ENCODE measurements at regions of chr14 and their contacts with region 1.

Region 1: GRCh38 chr14:77320238-77320935 is at the start of gene POMT2:
- DNase-seq: no peak
- ATAC-seq: peak; percentile 82
- H3K4me3 ChIP-seq: peak within 1 kb of the TSS; percentile 83 to 86
- H3K27ac ChIP-seq: peak within 1 kb of the TSS; percentile 86
- H3K4me1 ChIP-seq: peaks cover 31% of the 10 kb centered on the region
- H3K27me3 ChIP-seq: no peaks in the 10 kb centered on the region
- CTCF ChIP-seq: peak; percentile 48; the same call in 1 of the 2 replicates
- total RNA-seq, gene POMT2: 43.5 TPM

Region 2: GRCh38 chr14:77097700-77098528 is 222.5 kb before region 1 on chr14 and contains the start of gene CIPC:
- CTCF ChIA-PET with region 1: no interaction called
- POLR2A ChIA-PET with region 1: interaction called, 14 read pairs
- in situ Hi-C with region 1: no loop called
- intact Hi-C with region 1: no loop called
- DNase-seq: peak; percentile 78
- ATAC-seq: peak; percentile 94
- H3K4me3 ChIP-seq: peak within 1 kb of the TSS; percentile 87 to 97
- H3K27ac ChIP-seq: peak within 1 kb of the TSS; percentile 98
- H3K4me1 ChIP-seq: peaks cover 17% of the 10 kb centered on the region
- H3K27me3 ChIP-seq: no peaks in the 10 kb centered on the region
- CTCF ChIP-seq: no peak
- total RNA-seq, gene CIPC: 20.3 TPM

Region 3: GRCh38 chr14:77151918-77152588 is 168.3 kb before region 1 on chr14:
- CTCF ChIA-PET with region 1: interaction called, 33 read pairs
- POLR2A ChIA-PET with region 1: no interaction called
- in situ Hi-C with region 1: no loop called
- intact Hi-C with region 1: loop called (anchors 5 kb)
- DNase-seq: peak; percentile 24
- ATAC-seq: peak; percentile 83
- H3K4me3 ChIP-seq: no peak overlapping the region
- H3K27ac ChIP-seq: no peak overlapping the region
- H3K4me1 ChIP-seq: no peaks in the 10 kb centered on the region
- H3K27me3 ChIP-seq: peaks cover 3% of the 10 kb centered on the region; the same call in 1 of the 2 replicates
- CTCF ChIP-seq: no peak; the same call in 1 of the 2 replicates

Region 4: GRCh38 chr14:77195771-77196201 is 124.6 kb before region 1 on chr14:
- CTCF ChIA-PET with region 1: interaction called, 11 read pairs
- POLR2A ChIA-PET with region 1: interaction called, 5 read pairs
- in situ Hi-C with region 1: no loop called
- intact Hi-C with region 1: no loop called
- DNase-seq: no peak
- ATAC-seq: no peak
- H3K4me3 ChIP-seq: no peak overlapping the region
- H3K27ac ChIP-seq: no peak overlapping the region
- H3K4me1 ChIP-seq: no peaks in the 10 kb centered on the region
- H3K27me3 ChIP-seq: no peaks in the 10 kb centered on the region
- CTCF ChIP-seq: no peak

Region 5: DNA sequence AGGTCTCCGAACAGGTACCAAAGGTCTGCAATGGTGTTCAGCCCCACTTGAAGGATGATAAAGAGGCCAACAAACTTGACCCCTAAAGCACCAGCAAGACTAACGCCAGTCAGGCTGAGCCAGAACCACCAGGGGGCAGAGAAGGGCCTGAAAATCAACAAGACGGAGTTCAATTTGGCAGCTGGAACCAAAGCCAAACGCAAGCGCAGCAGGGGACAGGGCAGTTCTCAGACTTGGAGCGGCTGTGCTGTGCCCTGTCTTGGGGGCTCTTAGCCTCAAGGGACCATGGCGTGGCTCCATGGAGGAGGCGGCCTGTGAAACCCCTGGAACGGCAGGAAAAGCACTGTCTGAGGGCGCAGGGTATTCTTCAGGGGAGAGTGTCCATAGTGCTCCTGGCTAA is 19.3 kb before region 1 on chr14:
- CTCF ChIA-PET with region 1: interaction called, 16 read pairs
- POLR2A ChIA-PET with region 1: interaction called, 5 read pairs
- in situ Hi-C with region 1: no loop called
- intact Hi-C with region 1: no loop called
- DNase-seq: peak; percentile 69
- ATAC-seq: peak; percentile 73
- H3K4me3 ChIP-seq: no peak overlapping the region
- H3K27ac ChIP-seq: no peak overlapping the region
- H3K4me1 ChIP-seq: peaks cover 19% of the 10 kb centered on the region
- H3K27me3 ChIP-seq: no peaks in the 10 kb centered on the region
- CTCF ChIP-seq: peak; percentile 81

Region 6: GRCh38 chr14:77390188-77390587 is 69.8 kb after region 1 on chr14:
- CTCF ChIA-PET with region 1: interaction called, 12 read pairs
- POLR2A ChIA-PET with region 1: no interaction called
- in situ Hi-C with region 1: no loop called
- intact Hi-C with region 1: no loop called
- DNase-seq: no peak
- ATAC-seq: no peak
- H3K4me3 ChIP-seq: no peak overlapping the region
- H3K27ac ChIP-seq: no peak overlapping the region
- H3K4me1 ChIP-seq: no peaks in the 10 kb centered on the region
- H3K27me3 ChIP-seq: no peaks in the 10 kb centered on the region
- CTCF ChIP-seq: no peak

Region 7: GRCh38 chr14:77554207-77554606 is 233.8 kb after region 1 on chr14:
- CTCF ChIA-PET with region 1: no interaction called
- POLR2A ChIA-PET with region 1: no interaction called
- in situ Hi-C with region 1: no loop called
- intact Hi-C with region 1: loop called (anchors 10 kb)
- DNase-seq: no peak
- ATAC-seq: no peak
- H3K4me3 ChIP-seq: no peak overlapping the region
- H3K27ac ChIP-seq: no peak overlapping the region
- H3K4me1 ChIP-seq: no peaks in the 10 kb centered on the region
- H3K27me3 ChIP-seq: no peaks in the 10 kb centered on the region
- CTCF ChIP-seq: no peak